ENCODE measurements at regions of chr4 and their contacts with region 1.

Region 1: DNA sequence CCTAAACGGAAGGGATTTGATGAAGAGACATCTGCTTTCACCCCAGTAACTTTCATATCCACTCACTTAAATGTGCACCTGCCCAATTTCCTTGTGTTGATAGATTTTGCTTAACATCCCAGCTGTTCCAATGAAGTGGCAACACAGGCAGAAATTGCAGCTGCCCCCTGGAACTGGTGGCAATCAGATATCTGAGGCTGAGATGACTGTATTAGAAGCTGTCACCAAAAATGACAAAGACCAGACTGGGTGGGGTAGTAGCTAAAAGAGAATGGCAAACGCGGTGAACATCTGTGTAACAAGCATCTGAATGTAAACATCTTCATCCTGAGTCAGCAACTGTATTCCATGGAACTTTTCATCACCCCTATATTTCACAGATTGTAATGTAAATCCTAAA is 17.1 kb downstream of the GABRA2 start:
- DNase-seq: no peak
- ATAC-seq: no peak
- H3K4me3 ChIP-seq: no peak overlapping the region
- H3K27ac ChIP-seq: no peak overlapping the region
- H3K4me1 ChIP-seq: no peaks in the 10 kb centered on the region
- H3K27me3 ChIP-seq: no peaks in the 10 kb centered on the region
- CTCF ChIP-seq: no peak
- POLR2A ChIP-seq: no peak
- RAD21 ChIP-seq: no peak

Region 2: GRCh38 chr4:46417848-46418247 is 45.0 kb after region 1 on chr4:
- CTCF ChIA-PET with region 1: no interaction called
- POLR2A ChIA-PET with region 1: no interaction called
- dilution Hi-C with region 1: no loop called
- in situ Hi-C with region 1: no loop called
- intact Hi-C with region 1: loop called (anchors 1 kb)
- DNase-seq: no peak
- ATAC-seq: no peak
- H3K4me3 ChIP-seq: no peak overlapping the region
- H3K27ac ChIP-seq: no peak overlapping the region
- H3K4me1 ChIP-seq: no peaks in the 10 kb centered on the region
- H3K27me3 ChIP-seq: no peaks in the 10 kb centered on the region
- CTCF ChIP-seq: no peak
- POLR2A ChIP-seq: no peak
- RAD21 ChIP-seq: no peak

Region 3: DNA sequence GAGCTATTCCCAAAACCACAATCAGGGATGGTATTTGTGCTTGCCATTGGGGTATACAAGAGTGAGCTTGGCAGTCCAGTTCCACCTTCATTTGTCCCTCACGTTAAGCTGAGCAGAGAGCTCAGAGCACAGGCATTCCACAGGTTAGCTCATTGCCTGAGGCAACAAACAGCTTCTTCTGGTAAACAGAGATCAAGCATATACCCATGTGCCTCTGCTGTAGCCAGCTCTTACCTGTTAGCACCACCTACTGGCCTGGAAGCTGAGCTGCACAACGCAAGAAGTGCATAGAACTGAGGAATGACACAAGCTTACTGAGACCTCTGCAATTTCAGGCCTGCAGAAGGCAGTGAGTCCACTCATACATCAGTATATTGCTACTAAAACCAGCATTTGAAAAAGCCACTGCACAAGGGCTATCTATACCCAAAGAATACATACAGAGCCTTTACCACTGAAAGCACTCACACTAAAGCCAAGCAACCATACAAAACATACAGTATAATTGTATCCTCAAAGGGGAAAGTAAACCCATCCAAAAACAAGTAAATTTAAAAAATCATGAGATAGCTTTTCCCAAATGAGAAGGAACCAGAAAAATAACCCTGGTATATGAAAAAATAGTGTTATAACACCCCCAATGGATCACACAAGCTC is 275.3 kb after region 1 on chr4:
- CTCF ChIA-PET with region 1: no interaction called
- POLR2A ChIA-PET with region 1: no interaction called
- dilution Hi-C with region 1: no loop called
- in situ Hi-C with region 1: no loop called
- intact Hi-C with region 1: no loop called
- DNase-seq: peak; percentile 64
- ATAC-seq: peak; percentile 97
- H3K4me3 ChIP-seq: no peak overlapping the region
- H3K27ac ChIP-seq: no peak overlapping the region
- H3K4me1 ChIP-seq: no peaks in the 10 kb centered on the region
- H3K27me3 ChIP-seq: no peaks in the 10 kb centered on the region
- CTCF ChIP-seq: peak; percentile 55
- POLR2A ChIP-seq: no peak
- RAD21 ChIP-seq: peak; percentile 77

Measured in IMR-90 (cell line).